ENCODE measurements at regions of chr10 and their contacts with region 1.

Region 1: DNA sequence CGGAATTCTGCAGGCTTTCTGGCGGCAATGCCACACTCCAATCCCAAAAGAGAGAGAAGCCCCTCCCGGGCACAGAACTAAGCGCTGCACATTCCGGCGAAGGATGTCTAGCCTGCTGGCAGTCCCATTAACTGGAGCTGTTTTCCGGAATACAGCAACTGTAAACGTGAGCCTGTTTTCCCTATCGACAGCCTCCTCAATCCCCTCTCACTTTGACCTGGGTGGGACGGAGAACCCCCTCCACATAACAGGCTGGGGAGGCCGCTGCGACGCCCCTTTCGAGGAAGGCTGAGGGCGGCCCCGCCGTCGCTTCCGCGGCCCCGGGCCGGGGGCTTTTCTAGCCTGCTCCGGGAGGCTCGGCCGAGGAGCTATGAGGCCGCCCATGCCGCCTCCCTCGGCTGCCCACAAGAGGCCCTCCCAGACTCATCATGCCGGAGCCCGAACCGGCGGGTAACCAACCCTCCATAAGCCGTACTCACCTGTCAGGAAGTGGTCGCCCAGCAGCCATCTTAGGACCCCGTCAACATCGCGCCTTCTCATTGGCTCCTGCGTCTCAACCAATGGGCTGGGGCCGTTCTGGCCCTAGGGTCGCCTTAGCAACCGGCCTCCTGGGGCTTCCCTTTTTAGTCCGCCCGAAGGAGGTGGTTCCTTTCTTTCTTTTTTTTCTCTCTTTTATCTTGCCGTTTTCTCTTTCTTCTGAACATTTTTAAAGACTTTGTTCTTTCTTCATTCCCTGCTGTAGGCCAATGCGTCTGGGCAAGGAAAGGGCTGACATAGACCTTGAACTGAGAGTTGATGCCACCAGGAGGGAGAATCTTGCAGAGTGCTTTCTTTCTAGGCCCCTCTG is at the start of gene FAM204A:
- DNase-seq: peak; percentile 78 to 97
- H3K4me3 ChIP-seq: peak within 1 kb of the TSS; percentile 77 to 93
- H3K27ac ChIP-seq: peak within 1 kb of the TSS; percentile 51 to 77
- H3K4me1 ChIP-seq: peaks cover 0 to 11% of the 10 kb centered on the region in 2 donors
- H3K27me3 ChIP-seq: no peaks in the 10 kb centered on the region
- CTCF ChIP-seq: no peak
- total RNA-seq, gene FAM204A: 12.5 TPM

Region 2: DNA sequence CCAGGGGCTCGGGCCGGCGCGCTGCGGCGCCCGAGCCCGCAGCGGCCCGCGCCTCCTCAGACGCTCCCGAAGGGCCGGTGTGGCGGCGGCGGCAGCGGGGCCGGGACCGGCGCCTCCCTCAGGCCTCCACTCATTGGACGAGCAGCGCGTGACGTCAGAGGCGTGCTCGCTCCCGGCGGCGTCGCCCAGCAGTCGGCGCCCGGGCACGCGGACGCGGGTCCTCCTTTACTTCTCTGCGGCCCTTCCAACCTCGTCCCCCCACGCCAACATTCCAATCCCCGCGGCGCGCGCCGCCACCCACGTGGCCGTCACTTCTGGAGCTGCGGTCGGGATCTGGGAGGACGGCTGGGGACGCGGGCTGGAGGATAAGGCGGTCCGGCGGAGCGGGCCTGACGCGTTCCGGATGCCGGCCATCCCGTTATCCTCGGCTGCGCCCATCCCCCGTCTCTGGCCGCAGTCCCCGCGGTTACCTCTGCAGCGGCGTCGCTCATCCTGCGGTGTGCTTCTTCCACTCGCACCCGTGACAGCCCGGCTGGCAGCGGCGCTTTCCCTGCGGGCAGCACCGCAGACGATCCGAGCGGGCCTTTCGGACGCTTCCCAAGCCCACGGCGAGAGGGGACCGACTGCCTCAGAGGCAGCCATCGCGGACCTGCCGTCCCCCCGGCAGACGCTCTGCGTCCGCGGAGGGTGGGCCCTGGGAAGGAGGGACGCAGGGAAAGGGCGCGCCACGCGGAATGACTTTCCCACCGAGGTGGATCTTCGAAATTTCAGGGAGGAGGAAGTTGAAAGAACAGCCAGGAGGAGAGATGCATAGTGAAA is 966.4 kb before region 1 on chr10 and contains the start of gene PDZD8:
- intact Hi-C with region 1: loop called (anchors 10 kb)
- DNase-seq: peak; percentile 68 to 96
- H3K4me3 ChIP-seq: peak within 1 kb of the TSS; percentile 92 to 96
- H3K27ac ChIP-seq: peak within 1 kb of the TSS; percentile 96 to 97
- H3K4me1 ChIP-seq: peaks cover 0 to 13% of the 10 kb centered on the region in 2 donors
- H3K27me3 ChIP-seq: no peaks in the 10 kb centered on the region
- CTCF ChIP-seq: no peak
- total RNA-seq, gene PDZD8: 21.0 TPM

Region 3: GRCh38 chr10:118046395-118047156 is 295.4 kb before region 1 on chr10 and contains the start of gene RAB11FIP2:
- intact Hi-C with region 1: loop called (anchors 2 kb)
- DNase-seq: peak; percentile 82 to 98
- H3K4me3 ChIP-seq: peak within 1 kb of the TSS; percentile 75 to 96
- H3K27ac ChIP-seq: peak within 1 kb of the TSS; percentile 91 to 98
- H3K4me1 ChIP-seq: peaks cover 2 to 22% of the 10 kb centered on the region in 2 donors
- H3K27me3 ChIP-seq: no peaks in the 10 kb centered on the region
- CTCF ChIP-seq: peak in 1 of 3 experiments; percentile 17
- total RNA-seq, gene RAB11FIP2: 2.8 TPM

Region 4: DNA sequence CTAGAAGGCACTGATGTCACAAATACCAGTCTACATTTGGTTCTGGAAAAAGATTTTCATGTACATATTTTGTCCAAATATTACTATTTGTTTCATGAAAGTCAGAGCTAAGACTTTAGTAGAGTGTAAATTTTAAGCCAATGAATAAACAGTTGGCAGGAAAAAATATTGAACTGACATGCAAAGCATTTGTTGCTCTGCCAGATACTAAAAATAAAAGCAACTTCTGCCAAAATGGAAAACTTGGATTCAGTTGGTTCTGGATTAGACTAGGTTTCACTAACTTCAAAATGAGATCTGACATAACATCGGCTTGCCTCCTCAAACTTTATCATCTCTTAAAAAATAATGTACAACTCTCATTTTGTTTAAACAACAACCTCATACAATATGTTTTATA is 34.8 kb before region 1 on chr10:
- intact Hi-C with region 1: loop called (anchors 2 kb)
- DNase-seq: no peak
- H3K4me3 ChIP-seq: no peak overlapping the region
- H3K27ac ChIP-seq: peak overlapping the region; percentile 60
- H3K4me1 ChIP-seq: peaks cover 0 to 25% of the 10 kb centered on the region in 2 donors
- H3K27me3 ChIP-seq: no peaks in the 10 kb centered on the region
- CTCF ChIP-seq: no peak

Region 5: GRCh38 chr10:118383699-118384098 is 41.7 kb after region 1 on chr10:
- intact Hi-C with region 1: no loop called
- DNase-seq: no peak
- H3K4me3 ChIP-seq: no peak overlapping the region
- H3K27ac ChIP-seq: no peak overlapping the region
- H3K4me1 ChIP-seq: no peaks in the 10 kb centered on the region
- H3K27me3 ChIP-seq: no peaks in the 10 kb centered on the region
- CTCF ChIP-seq: no peak